Sigmoid colon (tissue), 7 donors: ENCODE measurements at regions of chr21 and their contacts with region 1.

Region 1: GRCh38 chr21:36927719-36928117 is 38.8 kb downstream of the HLCS start:
- DNase-seq: peak; percentile 80
- H3K4me3 ChIP-seq: no peak overlapping the region
- H3K27ac ChIP-seq: no peak overlapping the region
- H3K4me1 ChIP-seq: peaks cover 0 to 8% (median 0%) of the 10 kb centered on the region in 4 donors
- H3K27me3 ChIP-seq: no peaks in the 10 kb centered on the region
- CTCF ChIP-seq: peak; percentile 61 to 87 (median 78)
- EP300 ChIP-seq: no peak
- POLR2A ChIP-seq: no peak

Region 2: GRCh38 chr21:36429947-36430546 is 497.7 kb before region 1 on chr21:
- intact Hi-C with region 1: loop called (anchors 10 kb)
- DNase-seq: peak; percentile 90
- H3K4me3 ChIP-seq: peak overlapping the region in 2 of 4 donors; percentile 5 to 24
- H3K27ac ChIP-seq: peak overlapping the region; percentile 3 to 69 (median 59)
- H3K4me1 ChIP-seq: peaks cover 0 to 7% (median 0%) of the 10 kb centered on the region in 4 donors
- H3K27me3 ChIP-seq: no peaks in the 10 kb centered on the region
- CTCF ChIP-seq: no peak
- EP300 ChIP-seq: peak in 1 of 4 donors; percentile 48
- POLR2A ChIP-seq: no peak

Region 3: GRCh38 chr21:36504067-36505058 is 423.4 kb before region 1 on chr21:
- intact Hi-C with region 1: loop called (anchors 1 kb)
- DNase-seq: no peak
- H3K4me3 ChIP-seq: no peak overlapping the region
- H3K27ac ChIP-seq: no peak overlapping the region
- H3K4me1 ChIP-seq: peaks cover 0 to 4% (median 0%) of the 10 kb centered on the region in 4 donors
- H3K27me3 ChIP-seq: no peaks in the 10 kb centered on the region
- CTCF ChIP-seq: peak; percentile 27 to 93 (median 79)
- EP300 ChIP-seq: no peak
- POLR2A ChIP-seq: no peak

Region 4: DNA sequence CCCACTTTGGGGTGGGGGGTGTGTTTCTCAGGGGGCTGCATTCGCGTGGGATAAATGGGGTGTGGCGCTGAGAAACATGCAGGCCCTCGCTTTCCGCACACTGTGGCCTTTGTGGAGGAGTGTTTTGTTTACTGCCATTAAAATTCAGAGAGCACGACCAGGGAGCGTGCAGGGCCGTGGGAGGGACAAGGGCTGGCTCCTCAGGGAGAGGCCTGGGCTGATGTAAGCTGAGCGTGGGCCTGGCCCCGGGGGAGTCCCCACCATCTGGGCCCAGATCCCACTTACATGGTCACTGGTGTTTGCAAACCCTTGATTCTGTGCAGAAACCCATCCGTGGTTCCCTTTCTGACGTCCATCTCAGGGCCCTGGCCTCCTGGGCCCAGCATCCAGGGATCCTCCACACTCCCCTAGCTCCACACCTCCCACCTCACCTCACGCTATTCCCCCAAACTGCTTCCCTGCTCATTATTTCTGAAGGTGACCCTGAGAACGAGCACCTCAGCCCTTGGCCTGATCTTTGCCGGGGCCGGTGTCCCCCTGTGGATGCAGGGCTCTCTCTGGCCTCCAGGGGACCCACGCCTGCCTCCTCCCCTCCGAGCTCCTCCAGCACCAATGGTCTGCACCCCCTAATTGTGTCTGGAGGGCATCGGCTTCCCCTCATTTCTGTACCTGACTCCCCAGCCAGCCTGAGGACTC is 321.3 kb before region 1 on chr21:
- intact Hi-C with region 1: no loop called
- DNase-seq: no peak
- H3K4me3 ChIP-seq: no peak overlapping the region
- H3K27ac ChIP-seq: no peak overlapping the region
- H3K4me1 ChIP-seq: no peaks in the 10 kb centered on the region
- H3K27me3 ChIP-seq: peaks cover 0 to 15% (median 0%) of the 10 kb centered on the region in 3 donors
- CTCF ChIP-seq: no peak
- EP300 ChIP-seq: no peak
- POLR2A ChIP-seq: no peak

Region 5: DNA sequence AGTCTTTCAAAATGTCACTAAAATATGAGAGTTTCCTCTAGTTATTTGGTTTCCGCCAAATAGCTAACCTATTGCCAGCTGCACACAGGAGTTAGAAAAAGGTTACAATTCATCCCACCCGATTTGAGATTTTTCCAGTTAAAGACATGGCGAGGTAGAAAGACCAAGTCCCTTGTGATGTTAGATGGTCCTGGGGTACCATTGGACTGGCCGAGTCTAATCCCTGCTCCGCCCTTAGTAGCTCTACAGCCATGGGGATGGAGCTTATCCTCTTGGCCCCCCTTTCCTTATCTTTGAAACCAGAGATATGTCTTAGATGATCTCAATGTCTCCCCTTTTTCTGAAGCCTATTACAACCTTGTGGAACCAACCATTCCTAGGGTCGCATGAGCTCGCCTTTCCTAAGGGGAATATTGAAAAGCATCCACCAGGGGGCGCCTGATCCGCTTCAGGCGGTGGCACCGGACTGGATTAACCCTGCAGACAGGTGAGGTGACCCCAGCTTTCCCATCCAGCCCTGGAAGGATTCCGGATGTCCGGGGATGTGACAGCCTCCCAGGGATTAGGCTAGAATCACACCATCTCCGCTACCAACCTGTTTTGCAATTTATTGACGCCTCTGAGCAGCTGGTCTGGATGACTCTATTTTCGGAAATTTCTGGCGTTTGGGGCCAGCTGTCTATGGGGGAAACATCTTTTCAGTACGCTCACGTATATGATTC is 297.1 kb before region 1 on chr21:
- intact Hi-C with region 1: loop called (anchors 2 kb)
- DNase-seq: no peak
- H3K4me3 ChIP-seq: no peak overlapping the region
- H3K27ac ChIP-seq: no peak overlapping the region
- H3K4me1 ChIP-seq: no peaks in the 10 kb centered on the region
- H3K27me3 ChIP-seq: peaks cover 0 to 24% (median 0%) of the 10 kb centered on the region in 3 donors
- CTCF ChIP-seq: peak in 2 of 4 experiments; percentile 47 to 53
- EP300 ChIP-seq: no peak
- POLR2A ChIP-seq: no peak